OCI-LY7 (cell line): ENCODE measurements at regions of chr14 and their contacts with region 1.

Region 1: DNA sequence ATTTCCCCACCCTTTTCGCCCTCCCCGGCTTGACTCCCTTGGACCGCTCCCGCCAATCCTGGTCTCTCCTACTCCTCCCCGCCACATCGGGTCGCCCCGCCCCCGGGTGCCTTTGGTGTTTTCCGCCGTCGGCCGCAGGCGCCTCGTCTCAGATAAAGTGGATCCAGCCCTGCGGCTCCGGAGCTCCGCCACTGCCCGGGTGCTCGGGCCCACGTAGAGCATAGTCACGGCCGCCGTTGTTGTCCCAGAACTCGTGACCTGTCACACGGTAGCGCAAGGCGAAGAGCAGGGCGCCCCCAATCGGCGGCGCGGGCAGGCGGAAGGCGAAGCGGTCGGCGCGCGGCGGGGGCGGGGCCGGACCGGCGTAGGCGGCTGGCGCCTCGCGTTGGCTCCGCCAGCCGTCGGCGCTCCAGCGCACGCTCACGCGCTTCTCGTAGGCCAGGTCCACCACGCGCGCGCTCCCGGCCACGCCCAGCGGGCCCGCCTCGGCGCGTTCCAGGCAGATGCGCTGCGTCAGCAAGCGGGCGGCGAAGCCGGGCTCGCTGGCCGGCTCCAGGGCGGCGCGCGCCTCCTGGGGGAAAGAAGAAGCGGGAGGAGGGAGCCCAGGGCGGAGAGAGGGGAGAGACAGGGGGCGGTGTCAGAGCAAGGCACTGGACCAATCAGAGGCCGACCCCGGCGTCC is 1.2 kb downstream of the PPP1R3E start:
- DNase-seq: peak; percentile 99
- H3K4me3 ChIP-seq: peak overlapping the region; percentile 96
- H3K27ac ChIP-seq: peak overlapping the region; percentile 88
- H3K4me1 ChIP-seq: peaks cover 34% of the 10 kb centered on the region
- CTCF ChIP-seq: peak; percentile 79

Region 2: DNA sequence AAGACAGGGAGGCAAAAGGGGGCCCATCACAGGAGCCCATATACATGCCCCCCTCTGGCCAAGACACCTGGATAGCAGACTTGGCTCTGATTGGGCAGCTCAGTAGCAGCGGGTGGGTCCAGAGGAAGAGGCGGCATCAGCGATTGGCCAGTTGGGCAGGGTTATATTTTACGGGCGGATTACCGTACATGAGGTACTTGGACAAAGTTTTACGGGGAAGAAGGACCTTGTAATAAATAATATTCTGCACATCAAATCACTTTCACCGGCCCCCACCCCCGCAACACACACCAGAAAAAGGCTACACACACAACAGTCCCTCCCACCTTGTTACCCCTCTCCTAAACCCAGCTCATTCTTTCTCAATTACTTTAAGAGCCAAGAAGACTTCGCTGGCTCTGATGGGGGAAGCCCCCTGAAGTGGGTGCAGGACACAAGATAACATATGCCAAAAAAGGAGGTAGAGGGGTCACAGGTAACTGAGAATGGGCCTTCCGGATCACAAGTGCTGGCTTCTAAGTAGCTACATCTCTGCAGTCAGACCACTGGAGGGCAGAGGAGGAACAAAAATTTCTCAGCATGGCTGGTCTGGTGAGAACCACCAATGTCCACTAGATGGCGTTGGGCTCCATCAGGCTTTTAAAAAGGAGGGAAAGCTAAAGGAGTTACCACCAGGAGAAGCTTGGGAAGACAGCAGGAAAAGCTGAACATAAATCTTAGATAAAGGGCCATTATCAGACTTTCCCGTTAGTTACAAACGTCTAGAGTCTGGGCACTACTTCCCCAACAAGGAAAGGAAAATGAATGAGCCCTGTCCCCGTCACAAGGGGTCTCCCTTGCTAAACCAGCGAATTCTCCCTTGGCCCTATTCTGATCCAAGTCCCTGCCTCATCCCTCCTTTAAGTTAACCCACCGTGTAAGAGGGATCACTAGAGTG is 232.7 kb before region 1 on chr14:
- CTCF ChIA-PET with region 1: no interaction called
- POLR2A ChIA-PET with region 1: interaction called, 3 read pairs
- intact Hi-C with region 1: loop called (anchors 5 kb)
- DNase-seq: peak; percentile 87
- H3K4me3 ChIP-seq: no peak overlapping the region
- H3K27ac ChIP-seq: peak overlapping the region; percentile 25
- H3K4me1 ChIP-seq: peaks cover 29% of the 10 kb centered on the region
- CTCF ChIP-seq: peak; percentile 100

Region 3: GRCh38 chr14:23120541-23121251 is 180.7 kb before region 1 on chr14:
- CTCF ChIA-PET with region 1: interaction called, 3 read pairs
- POLR2A ChIA-PET with region 1: no interaction called
- intact Hi-C with region 1: loop called (anchors 2 kb)
- DNase-seq: peak; percentile 91
- H3K4me3 ChIP-seq: peak overlapping the region; percentile 48
- H3K27ac ChIP-seq: peak overlapping the region; percentile 88
- H3K4me1 ChIP-seq: peaks cover 38% of the 10 kb centered on the region
- CTCF ChIP-seq: peak; percentile 100

Region 4: GRCh38 chr14:23209651-23210423 is 91.6 kb before region 1 on chr14:
- CTCF ChIA-PET with region 1: no interaction called
- POLR2A ChIA-PET with region 1: no interaction called
- intact Hi-C with region 1: no loop called
- DNase-seq: no peak
- H3K4me3 ChIP-seq: no peak overlapping the region
- H3K27ac ChIP-seq: no peak overlapping the region
- H3K4me1 ChIP-seq: no peaks in the 10 kb centered on the region
- CTCF ChIP-seq: no peak

Region 5: DNA sequence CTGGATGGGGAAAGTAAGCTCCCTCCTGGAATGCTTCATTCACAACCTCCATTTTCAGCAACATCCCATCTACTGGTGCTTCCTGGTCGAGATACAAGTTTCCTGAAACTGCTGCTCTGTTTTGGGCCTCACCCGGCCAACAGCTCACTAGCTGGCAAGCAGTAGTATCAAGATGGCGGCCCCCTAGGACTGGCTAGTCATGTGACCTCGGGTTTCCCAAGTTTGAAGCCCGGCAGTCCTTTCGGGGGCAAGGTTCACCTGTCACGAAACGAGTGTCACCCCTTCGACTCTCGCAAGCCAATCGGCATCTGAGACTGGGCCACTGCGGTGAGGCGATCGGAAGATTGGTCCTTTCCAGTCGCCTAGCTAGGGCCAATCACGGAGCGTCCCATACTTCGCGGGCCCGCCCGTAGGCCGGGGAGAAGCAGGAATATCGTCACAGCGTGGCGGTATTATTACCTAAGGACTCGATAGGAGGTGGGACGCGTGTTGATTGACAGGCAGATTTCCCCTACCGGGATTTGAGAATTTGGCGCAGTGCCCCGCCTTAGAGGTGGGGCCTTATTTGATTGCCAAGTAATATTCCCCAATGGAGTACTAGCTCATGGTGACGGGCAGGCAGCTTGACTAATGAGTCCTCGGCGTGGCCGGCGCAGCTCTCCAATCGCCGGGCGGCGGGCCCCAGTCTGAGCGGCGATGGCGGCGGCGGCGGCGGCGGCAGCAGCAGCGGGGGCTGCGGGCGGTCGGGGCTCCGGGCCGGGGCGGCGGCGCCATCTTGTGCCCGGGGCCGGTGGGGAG is 19.5 kb after region 1 on chr14 and contains the start of gene PABPN1:
- CTCF ChIA-PET with region 1: interaction called, 9 read pairs
- POLR2A ChIA-PET with region 1: interaction called, 122 read pairs
- intact Hi-C with region 1: loop called (anchors 1 kb)
- DNase-seq: peak; percentile 100
- H3K4me3 ChIP-seq: peak within 1 kb of the TSS; percentile 99
- H3K27ac ChIP-seq: peak within 1 kb of the TSS; percentile 83
- H3K4me1 ChIP-seq: peaks cover 27% of the 10 kb centered on the region
- CTCF ChIP-seq: no peak
- total RNA-seq, gene PABPN1: 120 and 167 TPM in 2 replicates